ENCODE measurements at regions of chr9 and their contacts with region 1.

Region 1: GRCh38 chr9:77841739-77842386 is 189.7 kb downstream of the GNAQ start:
- DNase-seq: no peak
- ATAC-seq: no peak
- H3K4me3 Mint-ChIP-seq: no peak overlapping the region
- H3K27ac Mint-ChIP-seq: no peak overlapping the region
- H3K4me1 Mint-ChIP-seq: peaks cover 19% of the 10 kb centered on the region
- H3K27me3 Mint-ChIP-seq: no peaks in the 10 kb centered on the region

Region 2: GRCh38 chr9:77569173-77569734 is 272.6 kb before region 1 on chr9:
- CTCF ChIA-PET with region 1: no interaction called
- POLR2A ChIA-PET with region 1: no interaction called
- DNase-seq: no peak
- ATAC-seq: no peak
- H3K4me3 Mint-ChIP-seq: no peak overlapping the region
- H3K27ac Mint-ChIP-seq: no peak overlapping the region
- H3K4me1 Mint-ChIP-seq: no peaks in the 10 kb centered on the region
- H3K27me3 Mint-ChIP-seq: no peaks in the 10 kb centered on the region

Region 3: GRCh38 chr9:77811832-77812231 is 30.0 kb before region 1 on chr9:
- CTCF ChIA-PET with region 1: no interaction called
- POLR2A ChIA-PET with region 1: no interaction called
- DNase-seq: no peak
- ATAC-seq: no peak
- H3K4me3 Mint-ChIP-seq: no peak overlapping the region
- H3K27ac Mint-ChIP-seq: no peak overlapping the region
- H3K4me1 Mint-ChIP-seq: peaks cover 20% of the 10 kb centered on the region
- H3K27me3 Mint-ChIP-seq: no peaks in the 10 kb centered on the region

Region 4: DNA sequence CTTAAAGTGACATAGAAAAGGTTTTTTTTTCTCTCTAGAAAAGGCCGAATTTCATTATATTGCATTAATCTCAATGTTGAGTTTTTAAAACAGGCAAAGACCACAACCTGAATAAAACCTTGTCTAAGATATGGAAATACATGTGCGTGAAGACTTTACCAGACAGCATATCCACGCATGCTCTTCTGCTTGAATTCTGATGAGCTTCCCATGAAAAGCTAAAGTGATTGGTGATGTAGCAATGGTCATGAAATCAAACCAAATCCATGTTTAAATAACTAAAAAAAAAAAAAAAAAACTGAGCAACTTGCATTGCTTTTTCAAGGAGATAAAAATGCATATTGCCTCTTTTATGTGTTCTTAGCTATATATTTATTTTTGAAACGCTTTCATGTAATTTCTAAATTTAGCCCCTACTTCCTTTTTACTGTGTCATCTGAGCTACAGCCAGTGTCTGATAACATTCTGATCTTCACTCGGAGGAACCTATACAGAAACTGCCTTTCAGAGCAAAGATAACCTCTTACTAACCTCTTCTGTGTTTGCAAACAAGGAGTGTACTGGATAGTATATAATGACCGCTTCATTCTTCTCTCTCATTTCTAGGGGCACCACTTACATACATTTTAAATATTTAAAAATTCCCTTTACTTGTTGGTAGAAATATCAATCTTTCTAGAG is 14.6 kb before region 1 on chr9:
- CTCF ChIA-PET with region 1: interaction called, 17 read pairs
- POLR2A ChIA-PET with region 1: interaction called, 3 read pairs
- DNase-seq: no peak
- ATAC-seq: no peak
- H3K4me3 Mint-ChIP-seq: peak overlapping the region; percentile 26
- H3K27ac Mint-ChIP-seq: peak overlapping the region; percentile 63
- H3K4me1 Mint-ChIP-seq: peaks cover 20% of the 10 kb centered on the region
- H3K27me3 Mint-ChIP-seq: no peaks in the 10 kb centered on the region

Region 5: DNA sequence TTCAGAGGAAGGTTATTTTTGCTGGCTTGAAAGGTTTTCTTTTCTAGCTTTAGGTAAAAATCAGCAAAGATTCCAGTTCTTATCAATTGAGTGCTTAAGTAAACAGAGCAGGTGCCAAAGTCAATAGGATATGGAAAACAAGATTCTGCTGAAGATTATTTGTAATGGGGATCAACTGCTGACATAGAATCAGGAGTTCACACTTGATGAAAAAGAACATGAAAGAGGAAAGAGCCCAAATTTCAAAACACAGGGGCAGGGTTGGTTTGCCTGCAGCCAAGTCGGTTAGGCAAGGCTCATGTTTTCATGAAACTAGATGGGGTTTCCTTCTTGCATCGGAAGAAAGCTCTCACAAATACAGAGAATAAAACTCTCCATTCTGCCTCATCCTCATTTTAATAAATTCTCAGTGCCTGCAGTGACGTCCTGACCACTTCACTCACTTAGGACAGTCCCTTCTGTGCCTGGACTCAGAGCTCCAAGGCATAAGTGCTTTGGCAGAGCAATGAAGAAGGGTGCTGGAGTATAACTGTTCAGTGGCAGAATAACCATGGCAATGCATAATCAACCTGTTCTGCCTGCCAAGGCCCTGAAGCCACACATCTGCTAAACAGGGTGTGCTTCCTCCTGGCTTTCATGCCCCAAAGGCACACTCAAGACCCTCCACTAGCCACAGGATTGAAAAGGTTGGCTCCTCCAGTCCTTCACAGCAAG is 10.2 kb after region 1 on chr9:
- CTCF ChIA-PET with region 1: interaction called, 11 read pairs
- POLR2A ChIA-PET with region 1: no interaction called
- DNase-seq: no peak
- ATAC-seq: no peak
- H3K4me3 Mint-ChIP-seq: no peak overlapping the region
- H3K27ac Mint-ChIP-seq: no peak overlapping the region
- H3K4me1 Mint-ChIP-seq: peaks cover 25% of the 10 kb centered on the region
- H3K27me3 Mint-ChIP-seq: no peaks in the 10 kb centered on the region

Region 6: GRCh38 chr9:78121488-78121887 is 279.6 kb after region 1 on chr9:
- CTCF ChIA-PET with region 1: interaction called, 10 read pairs
- POLR2A ChIA-PET with region 1: no interaction called
- DNase-seq: peak; percentile 68
- ATAC-seq: no peak
- H3K4me3 Mint-ChIP-seq: no peak overlapping the region
- H3K27ac Mint-ChIP-seq: no peak overlapping the region
- H3K4me1 Mint-ChIP-seq: peaks cover 23% of the 10 kb centered on the region
- H3K27me3 Mint-ChIP-seq: peaks cover 8% of the 10 kb centered on the region

Measured in activated CD8-positive, alpha-beta T cell treated with anti-CD3 and anti-CD28 coated beads, Interleukin-2, amount 10 ng/mL, durations not matched to agents 7 days and 5 days (primary cell).